Activated CD4-positive, alpha-beta T cell treated with anti-CD3 and anti-CD28 coated beads, Interleukin-2, amount 10 ng/mL, durations not matched to agents 24 days and 14 days (primary cell): ENCODE measurements at regions of chr11 and their contacts with region 1.

Region 1: DNA sequence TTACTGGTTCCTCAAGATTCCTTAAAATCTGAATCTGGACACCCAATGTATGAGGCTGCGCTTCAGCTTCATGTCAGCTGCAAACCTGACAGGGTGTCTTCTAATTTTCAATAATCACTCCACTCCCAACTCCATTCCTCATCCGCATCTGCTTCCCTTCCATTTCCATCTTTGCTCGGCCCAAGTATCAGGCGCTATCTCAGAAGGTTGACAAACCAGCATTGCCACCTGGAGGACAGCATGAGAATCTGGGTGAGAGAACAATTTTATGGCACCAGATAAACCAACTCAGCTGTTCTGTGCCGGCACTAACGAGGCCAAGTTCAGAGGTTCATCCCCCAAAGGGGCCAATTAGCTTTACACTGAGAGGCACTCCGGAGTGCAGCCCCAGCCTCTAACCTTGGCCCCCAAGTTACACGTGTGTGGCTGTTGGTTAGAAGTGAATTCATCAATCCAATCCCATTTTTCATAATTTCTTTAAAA is 79.1 kb upstream of the LMO2 start:
- DNase-seq: no peak
- H3K4me3 Mint-ChIP-seq: no peak overlapping the region
- H3K27ac Mint-ChIP-seq: no peak overlapping the region
- H3K4me1 Mint-ChIP-seq: no peaks in the 10 kb centered on the region
- H3K27me3 Mint-ChIP-seq: peaks cover 16% of the 10 kb centered on the region

Region 2: GRCh38 chr11:33857933-33858371 is 113.1 kb before region 1 on chr11:
- intact Hi-C with region 1: loop called (anchors 1 kb)
- DNase-seq: peak; percentile 90
- H3K4me3 Mint-ChIP-seq: no peak overlapping the region
- H3K27ac Mint-ChIP-seq: no peak overlapping the region
- H3K4me1 Mint-ChIP-seq: no peaks in the 10 kb centered on the region
- H3K27me3 Mint-ChIP-seq: peaks cover 43% of the 10 kb centered on the region